Upper lobe of right lung (tissue), 1 donor: ENCODE measurements at regions of chr19 and their contacts with region 1.

Region 1: GRCh38 chr19:34096020-34096915 is 76.0 kb upstream of the LSM14A start:
- DNase-seq: no peak
- ATAC-seq: peak; percentile 62
- H3K4me3 ChIP-seq: no peak overlapping the region
- H3K27ac ChIP-seq: peak overlapping the region; percentile 17
- H3K4me1 ChIP-seq: no peaks in the 10 kb centered on the region
- H3K27me3 ChIP-seq: no peaks in the 10 kb centered on the region
- CTCF ChIP-seq: peak; percentile 70

Region 2: DNA sequence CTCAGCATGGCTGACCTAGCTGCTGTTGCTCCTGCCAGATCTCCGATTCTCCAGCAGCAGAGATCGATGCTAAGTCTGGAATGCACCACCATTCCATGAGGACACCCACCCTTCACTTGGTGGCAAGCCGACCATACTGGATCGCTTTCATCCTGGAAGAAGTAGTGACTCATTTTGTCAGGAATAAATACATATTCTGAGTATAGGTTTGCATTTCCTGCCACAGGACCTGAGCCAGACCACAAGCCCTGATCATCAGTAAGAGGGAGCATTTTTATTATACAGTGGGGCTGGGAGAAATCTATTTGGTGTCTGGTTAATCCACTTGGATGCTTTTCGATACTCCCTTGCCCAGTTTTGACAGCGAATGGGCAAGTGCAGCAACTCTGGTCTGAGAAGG is 310.5 kb before region 1 on chr19:
- intact Hi-C with region 1: loop called (anchors 10 kb)
- DNase-seq: no peak
- ATAC-seq: no peak
- H3K4me3 ChIP-seq: no peak overlapping the region
- H3K27ac ChIP-seq: no peak overlapping the region
- H3K4me1 ChIP-seq: no peaks in the 10 kb centered on the region
- H3K27me3 ChIP-seq: no peaks in the 10 kb centered on the region
- CTCF ChIP-seq: no peak

Region 3: GRCh38 chr19:34049944-34050343 is 46.3 kb before region 1 on chr19:
- intact Hi-C with region 1: no loop called
- DNase-seq: no peak
- ATAC-seq: no peak
- H3K4me3 ChIP-seq: no peak overlapping the region
- H3K27ac ChIP-seq: no peak overlapping the region
- H3K4me1 ChIP-seq: no peaks in the 10 kb centered on the region
- H3K27me3 ChIP-seq: no peaks in the 10 kb centered on the region
- CTCF ChIP-seq: no peak